ENCODE measurements at regions of chr21 and their contacts with region 1.

Region 1: DNA sequence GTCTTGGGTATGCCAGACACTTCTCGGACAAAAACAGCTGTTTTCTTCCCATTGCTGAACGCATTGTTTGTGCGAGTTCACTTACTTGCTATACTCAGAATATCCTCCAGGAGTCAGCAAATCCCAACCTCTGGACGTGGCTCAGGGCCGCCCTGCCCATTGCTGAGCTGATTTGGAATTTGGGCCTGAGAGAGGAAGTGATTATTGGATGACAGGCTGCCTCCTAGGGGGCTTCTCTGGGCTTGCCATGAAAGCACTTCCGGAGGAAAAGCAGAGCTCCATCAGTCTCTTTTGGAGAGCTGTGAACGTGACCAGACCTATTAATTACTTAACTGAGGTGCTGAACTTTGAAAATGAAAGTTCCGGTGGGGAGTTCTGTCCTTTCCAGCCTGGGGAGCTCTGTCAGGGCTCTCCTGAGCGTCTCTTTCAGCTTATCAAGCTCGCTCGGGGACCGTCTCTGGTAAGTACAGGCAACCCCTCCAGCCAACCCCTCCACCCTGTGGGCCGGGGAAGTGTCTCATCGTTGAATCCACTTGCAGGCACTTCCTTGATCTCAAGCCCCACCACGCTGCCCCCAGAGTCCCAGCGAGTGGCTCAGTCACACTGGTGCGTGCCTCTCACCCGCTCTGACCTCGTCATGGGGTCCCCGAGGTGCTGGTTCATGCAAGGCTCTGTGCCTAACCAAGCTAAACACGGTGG is 76.9 kb downstream of the CLIC6 start:
- DNase-seq: peak; percentile 50 to 55
- H3K4me3 ChIP-seq: no peak overlapping the region
- H3K27ac ChIP-seq: no peak overlapping the region
- H3K4me1 ChIP-seq: peaks cover 0 to 20% of the 10 kb centered on the region in 2 donors
- H3K27me3 ChIP-seq: no peaks in the 10 kb centered on the region
- CTCF ChIP-seq: peak; percentile 43 to 92 (median 90)
- POLR2A ChIP-seq: no peak

Region 2: DNA sequence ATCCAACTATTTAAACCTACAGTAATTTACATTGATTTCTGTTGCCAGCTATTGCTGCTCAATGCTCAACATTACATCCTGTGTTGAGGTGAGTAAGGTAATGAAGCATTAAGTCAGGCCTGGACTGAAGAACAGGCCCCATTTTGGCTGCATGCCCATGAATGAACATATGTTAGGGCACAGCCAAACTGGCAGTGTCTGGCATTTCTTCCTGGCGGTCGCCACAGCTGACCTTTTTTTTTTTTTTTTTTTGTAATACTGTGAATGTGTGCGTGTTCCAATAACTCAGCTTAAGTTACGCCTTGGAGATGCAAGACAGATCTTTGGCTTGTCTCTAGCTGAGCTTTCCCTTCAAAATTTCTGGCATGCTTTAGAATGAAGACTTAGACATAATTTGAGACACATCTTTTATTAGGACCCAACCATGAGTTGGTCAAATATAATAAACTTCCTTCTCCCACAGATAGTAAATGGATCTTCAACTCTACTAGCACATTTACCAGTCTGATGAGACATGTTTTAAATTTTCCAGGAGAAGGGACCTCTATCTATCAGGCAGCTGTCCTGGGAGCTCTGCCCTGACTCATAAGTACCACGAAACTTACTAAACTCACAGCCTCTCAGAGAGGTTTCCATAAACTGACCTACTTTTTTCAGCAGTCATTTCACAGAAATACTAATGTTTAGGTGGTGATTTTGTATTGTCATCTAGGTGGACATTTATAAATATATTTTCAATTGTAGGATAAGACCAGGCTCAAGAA is 644.5 kb after region 1 on chr21:
- intact Hi-C with region 1: loop called (anchors 10 kb)
- DNase-seq: peak; percentile 29 to 30
- H3K4me3 ChIP-seq: no peak overlapping the region
- H3K27ac ChIP-seq: no peak overlapping the region
- H3K4me1 ChIP-seq: no peaks in the 10 kb centered on the region
- H3K27me3 ChIP-seq: no peaks in the 10 kb centered on the region
- CTCF ChIP-seq: no peak
- POLR2A ChIP-seq: no peak

Region 3: GRCh38 chr21:35833991-35834390 is 1088.3 kb after region 1 on chr21:
- intact Hi-C with region 1: loop called (anchors 10 kb)
- DNase-seq: no peak
- H3K4me3 ChIP-seq: no peak overlapping the region
- H3K27ac ChIP-seq: no peak overlapping the region
- H3K4me1 ChIP-seq: no peaks in the 10 kb centered on the region
- H3K27me3 ChIP-seq: no peaks in the 10 kb centered on the region
- CTCF ChIP-seq: no peak
- POLR2A ChIP-seq: no peak

Measured in thyroid gland (tissue), 4 donors.